HepG2 (cell line): ENCODE measurements at regions of chr6 and their contacts with region 1.

Region 1: DNA sequence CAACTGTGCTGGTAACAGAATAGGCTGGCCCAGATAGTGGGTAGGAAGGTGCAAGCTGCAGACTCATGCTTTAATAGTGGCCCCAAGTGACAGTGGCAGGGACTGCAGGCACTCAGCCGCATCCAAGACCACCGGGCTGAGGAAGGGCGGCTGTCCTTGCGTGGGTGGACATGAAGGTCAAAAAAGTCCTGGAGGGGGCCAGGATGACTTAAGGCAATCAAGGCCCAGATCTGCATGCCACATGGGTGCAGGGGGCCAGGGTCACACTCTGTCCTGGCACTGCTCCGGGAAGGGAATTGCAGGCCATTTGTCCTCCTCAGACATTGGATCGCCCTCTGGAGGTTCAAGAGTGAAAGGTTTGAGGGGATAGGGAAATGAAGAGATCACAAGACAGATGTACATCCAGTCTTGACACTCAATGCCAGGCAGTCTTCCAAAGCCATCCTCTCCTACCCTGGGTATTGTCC is 10.4 kb upstream of the VNN2 start:
- DNase-seq: peak; percentile 55
- ATAC-seq: peak; percentile 100
- H3K4me3 ChIP-seq: peak overlapping the region; percentile 10 to 68 (median 29); a peak in 4 of 6 replicates
- H3K27ac ChIP-seq: no peak overlapping the region
- H3K4me1 ChIP-seq: no peaks in the 10 kb centered on the region
- H3K27me3 ChIP-seq: no peaks in the 10 kb centered on the region
- CTCF ChIP-seq: peak; percentile 92
- EP300 ChIP-seq: no peak
- POLR2A ChIP-seq: no peak
- RAD21 ChIP-seq: peak; percentile 93

Region 2: GRCh38 chr6:132483779-132484679 is 284.1 kb before region 1 on chr6:
- CTCF ChIA-PET with region 1: no interaction called
- POLR2A ChIA-PET with region 1: no interaction called
- in situ Hi-C with region 1: no loop called
- intact Hi-C with region 1: no loop called
- DNase-seq: peak; percentile 75
- ATAC-seq: peak; percentile 88
- H3K4me3 ChIP-seq: no peak overlapping the region
- H3K27ac ChIP-seq: no peak overlapping the region
- H3K4me1 ChIP-seq: no peaks in the 10 kb centered on the region
- H3K27me3 ChIP-seq: no peaks in the 10 kb centered on the region
- CTCF ChIP-seq: peak; percentile 83
- EP300 ChIP-seq: no peak
- POLR2A ChIP-seq: no peak
- RAD21 ChIP-seq: peak; percentile 85

Region 3: GRCh38 chr6:132598473-132598872 is 169.6 kb before region 1 on chr6:
- CTCF ChIA-PET with region 1: no interaction called
- POLR2A ChIA-PET with region 1: no interaction called
- in situ Hi-C with region 1: no loop called
- intact Hi-C with region 1: loop called (anchors 5 kb)
- DNase-seq: peak; percentile 57
- ATAC-seq: peak; percentile 100
- H3K4me3 ChIP-seq: no peak overlapping the region
- H3K27ac ChIP-seq: no peak overlapping the region
- H3K4me1 ChIP-seq: no peaks in the 10 kb centered on the region
- H3K27me3 ChIP-seq: no peaks in the 10 kb centered on the region; a peak in 1 of 5 replicates
- CTCF ChIP-seq: peak; percentile 56
- EP300 ChIP-seq: no peak
- POLR2A ChIP-seq: no peak
- RAD21 ChIP-seq: no peak

Region 4: DNA sequence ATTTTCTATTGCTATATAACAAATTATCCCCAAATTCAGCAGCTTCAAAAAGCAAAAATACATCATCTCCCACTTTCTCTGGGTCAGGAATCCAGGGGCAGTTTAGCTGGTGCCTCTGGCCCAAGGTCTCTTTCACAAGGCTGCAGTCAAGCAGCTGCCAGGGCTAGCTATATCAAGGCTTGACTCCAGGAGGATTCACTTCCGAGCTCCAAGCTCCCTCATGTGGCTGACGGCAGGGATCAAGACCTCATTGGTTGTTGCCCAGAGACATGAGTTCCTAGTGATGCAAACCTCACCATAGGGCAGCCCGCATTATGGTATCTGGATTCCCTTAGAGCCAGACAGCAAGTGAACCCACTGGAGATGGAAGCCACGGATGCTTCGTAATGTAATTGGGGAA is 52.9 kb before region 1 on chr6:
- CTCF ChIA-PET with region 1: interaction called, 3 read pairs
- POLR2A ChIA-PET with region 1: no interaction called
- in situ Hi-C with region 1: no loop called
- intact Hi-C with region 1: loop called (anchors 5 kb)
- DNase-seq: peak; percentile 65
- ATAC-seq: peak; percentile 97
- H3K4me3 ChIP-seq: no peak overlapping the region
- H3K27ac ChIP-seq: no peak overlapping the region
- H3K4me1 ChIP-seq: peaks cover 29% of the 10 kb centered on the region
- H3K27me3 ChIP-seq: no peaks in the 10 kb centered on the region
- CTCF ChIP-seq: peak; percentile 86
- EP300 ChIP-seq: no peak
- POLR2A ChIP-seq: no peak
- RAD21 ChIP-seq: peak; percentile 75